ENCODE measurements at regions of chr5 and their contacts with region 1.

Region 1: DNA sequence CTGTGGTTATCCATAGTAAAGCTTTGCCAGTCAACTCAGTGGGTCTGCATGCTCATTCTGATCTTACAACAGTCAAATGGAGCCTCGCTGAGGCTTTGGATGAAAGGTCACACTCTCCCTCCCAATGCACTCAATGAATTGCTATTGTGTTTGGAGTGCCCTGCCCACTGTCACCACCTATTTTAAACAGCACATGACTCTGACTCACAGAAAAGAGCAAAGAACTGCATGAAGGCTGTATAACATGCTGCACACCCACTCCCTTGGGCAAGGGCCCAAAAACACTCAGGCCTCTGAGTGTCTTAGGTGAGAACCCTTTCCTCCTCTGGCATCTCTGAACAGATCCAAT is 118.7 kb upstream of the CCDC112 start:
- DNase-seq: peak; percentile 90
- H3K4me3 ChIP-seq: no peak overlapping the region
- H3K27ac ChIP-seq: peak overlapping the region; percentile 21
- H3K4me1 ChIP-seq: peaks cover 28% of the 10 kb centered on the region
- H3K27me3 ChIP-seq: no peaks in the 10 kb centered on the region
- CTCF ChIP-seq: no peak

Region 2: DNA sequence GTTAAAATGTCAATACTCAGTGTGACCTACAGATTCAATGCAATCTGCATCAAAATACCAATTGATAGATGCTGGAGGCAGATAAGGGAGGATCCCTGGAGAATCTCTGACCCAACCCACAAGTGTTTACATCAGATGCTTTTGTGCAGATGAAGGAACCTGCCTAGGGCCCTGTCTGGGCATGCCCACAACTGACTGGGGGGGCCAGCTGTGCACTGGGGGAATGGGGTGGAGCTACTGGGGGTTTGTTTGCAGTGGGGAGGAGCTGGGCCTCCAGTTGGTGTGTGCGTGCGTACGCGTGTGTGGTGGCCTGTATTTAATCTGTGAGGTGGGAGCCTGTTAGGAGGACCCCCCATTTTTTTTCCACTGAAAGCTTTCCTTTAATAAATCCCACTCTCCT is 490.3 kb before region 1 on chr5:
- CTCF ChIA-PET with region 1: no interaction called
- dilution Hi-C with region 1: no loop called
- in situ Hi-C with region 1: no loop called
- intact Hi-C with region 1: no loop called
- DNase-seq: no peak
- H3K4me3 ChIP-seq: no peak overlapping the region
- H3K27ac ChIP-seq: no peak overlapping the region
- H3K4me1 ChIP-seq: no peaks in the 10 kb centered on the region
- H3K27me3 ChIP-seq: no peaks in the 10 kb centered on the region
- CTCF ChIP-seq: no peak

Region 3: DNA sequence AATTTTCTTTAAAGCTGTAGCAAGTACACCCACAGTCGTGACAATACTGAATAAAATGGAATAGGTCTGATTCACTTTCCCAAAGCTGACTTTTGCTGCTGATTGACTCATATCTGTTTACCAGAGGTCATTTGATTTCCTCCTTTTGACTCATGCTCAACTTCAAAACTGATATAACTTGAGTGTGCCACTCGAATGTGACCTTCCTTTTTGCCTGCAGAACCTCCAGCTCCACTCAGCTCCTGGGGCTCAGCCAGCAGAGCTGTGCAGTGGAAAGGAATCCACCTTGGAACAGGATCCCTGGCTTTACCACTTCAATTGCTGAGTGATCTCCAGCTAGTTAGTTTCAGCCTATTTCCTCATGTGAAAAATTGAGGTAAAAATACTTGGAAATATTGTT is 45.4 kb after region 1 on chr5:
- CTCF ChIA-PET with region 1: no interaction called
- dilution Hi-C with region 1: no loop called
- in situ Hi-C with region 1: no loop called
- intact Hi-C with region 1: loop called (anchors 2 kb)
- DNase-seq: peak; percentile 90
- H3K4me3 ChIP-seq: no peak overlapping the region
- H3K27ac ChIP-seq: peak overlapping the region; percentile 92
- H3K4me1 ChIP-seq: peaks cover 40% of the 10 kb centered on the region
- H3K27me3 ChIP-seq: no peaks in the 10 kb centered on the region
- CTCF ChIP-seq: no peak

Region 4: DNA sequence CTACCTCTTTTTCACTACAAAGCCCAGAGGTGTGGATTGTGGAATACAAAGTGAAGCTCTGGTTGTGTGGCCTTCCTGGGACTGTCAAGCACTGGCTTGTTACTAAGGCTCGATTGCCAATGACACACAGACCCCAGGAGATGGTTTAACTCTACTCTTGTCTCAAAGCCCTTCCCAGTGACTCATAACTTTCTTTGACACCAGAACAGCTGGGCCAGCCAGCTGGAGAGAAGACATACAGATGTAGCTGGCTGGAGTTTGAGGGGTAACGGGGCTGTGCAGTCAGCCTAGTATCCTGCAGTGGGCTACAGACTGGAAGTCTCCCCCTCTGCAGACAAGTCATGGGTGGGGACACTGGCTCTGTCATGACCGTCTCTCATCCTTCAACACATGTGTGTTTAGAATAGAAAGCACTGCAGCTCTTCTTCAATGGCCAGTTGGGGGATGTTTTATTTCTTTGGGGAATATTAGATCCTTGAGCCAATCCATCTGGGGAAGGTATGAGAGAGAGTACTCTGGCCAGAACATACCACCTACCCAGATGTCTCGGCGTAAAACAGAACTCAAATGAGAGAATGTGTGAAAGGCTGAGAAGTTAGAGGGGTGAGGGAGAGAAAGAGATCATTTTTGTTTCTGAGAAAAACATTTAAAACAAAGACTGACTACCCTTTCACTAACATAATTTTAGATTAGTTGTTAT is 1106.2 kb after region 1 on chr5:
- CTCF ChIA-PET with region 1: no interaction called
- dilution Hi-C with region 1: no loop called
- in situ Hi-C with region 1: no loop called
- intact Hi-C with region 1: no loop called
- DNase-seq: peak; percentile 28
- H3K4me3 ChIP-seq: no peak overlapping the region
- H3K27ac ChIP-seq: no peak overlapping the region
- H3K4me1 ChIP-seq: peaks cover 19% of the 10 kb centered on the region
- H3K27me3 ChIP-seq: no peaks in the 10 kb centered on the region
- CTCF ChIP-seq: no peak

Measured in mammary epithelial cell (primary cell).